ENCODE measurements at regions of chr16 and their contacts with region 1.

Region 1: GRCh38 chr16:66872943-66873684 is 7.2 kb upstream of the PDP2 start:
- DNase-seq: peak; percentile 96
- H3K4me3 Mint-ChIP-seq: peak overlapping the region; percentile 74
- H3K27ac Mint-ChIP-seq: peak overlapping the region; percentile 69
- H3K4me1 Mint-ChIP-seq: peaks cover 46% of the 10 kb centered on the region
- H3K27me3 Mint-ChIP-seq: no peaks in the 10 kb centered on the region

Region 2: GRCh38 chr16:66406534-66407221 is 466.4 kb before region 1 on chr16:
- CTCF ChIA-PET with region 1: interaction called, 18 read pairs
- POLR2A ChIA-PET with region 1: no interaction called
- intact Hi-C with region 1: loop called (anchors 5 kb)
- DNase-seq: peak; percentile 92
- H3K4me3 Mint-ChIP-seq: peak overlapping the region; percentile 80
- H3K27ac Mint-ChIP-seq: no peak overlapping the region
- H3K4me1 Mint-ChIP-seq: peaks cover 24% of the 10 kb centered on the region
- H3K27me3 Mint-ChIP-seq: peaks cover 2% of the 10 kb centered on the region

Region 3: DNA sequence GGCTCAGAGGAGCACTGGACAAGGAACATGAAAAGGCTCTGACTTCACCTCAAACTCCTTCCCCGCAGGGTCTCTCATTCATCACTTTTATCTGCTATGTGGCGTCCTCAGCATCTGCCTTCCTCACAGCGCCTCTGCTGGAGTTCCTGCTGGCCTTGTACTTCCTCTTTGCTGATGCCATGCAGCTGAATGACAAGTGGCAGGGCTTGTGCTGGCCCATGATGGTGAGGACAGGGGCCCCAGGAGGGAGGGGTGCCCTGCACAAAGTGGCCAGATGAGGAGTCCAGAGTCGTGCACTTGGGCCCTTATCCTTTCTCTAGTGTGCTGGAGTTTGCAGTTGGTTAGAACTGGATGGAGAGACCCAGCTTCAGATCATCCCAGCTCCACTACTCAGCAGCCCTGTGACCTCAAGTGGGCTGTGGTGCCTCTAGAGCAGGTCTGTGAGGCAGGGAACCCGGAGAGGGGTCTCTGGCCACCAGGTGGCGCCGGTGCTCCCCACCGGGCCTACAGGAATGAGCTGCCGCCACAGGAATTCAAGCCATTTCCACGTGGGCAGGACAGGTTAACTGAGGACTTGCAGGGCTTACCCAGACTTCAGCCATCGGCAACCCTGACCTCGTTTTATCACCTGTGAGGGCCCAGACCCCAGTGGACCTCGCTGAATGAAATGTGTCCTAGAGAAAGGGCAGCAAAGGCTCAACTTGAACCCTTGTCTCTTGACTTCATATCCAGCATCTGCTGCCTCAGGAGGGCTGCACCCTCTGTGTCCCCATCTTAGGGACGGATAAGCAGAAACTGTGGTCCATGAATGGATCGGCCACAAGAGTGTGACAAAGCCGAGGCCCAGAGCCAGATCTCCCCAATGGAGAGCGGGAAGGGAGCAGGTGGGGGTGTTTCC is 264.6 kb before region 1 on chr16:
- CTCF ChIA-PET with region 1: interaction called, 13 read pairs
- POLR2A ChIA-PET with region 1: no interaction called
- intact Hi-C with region 1: loop called (anchors 5 kb)
- DNase-seq: peak; percentile 89
- H3K4me3 Mint-ChIP-seq: no peak overlapping the region
- H3K27ac Mint-ChIP-seq: peak overlapping the region; percentile 62
- H3K4me1 Mint-ChIP-seq: peaks cover 34% of the 10 kb centered on the region
- H3K27me3 Mint-ChIP-seq: no peaks in the 10 kb centered on the region

Region 4: GRCh38 chr16:66705790-66706505 is 167.2 kb before region 1 on chr16:
- CTCF ChIA-PET with region 1: no interaction called
- POLR2A ChIA-PET with region 1: no interaction called
- intact Hi-C with region 1: no loop called
- DNase-seq: no peak
- H3K4me3 Mint-ChIP-seq: no peak overlapping the region
- H3K27ac Mint-ChIP-seq: no peak overlapping the region
- H3K4me1 Mint-ChIP-seq: no peaks in the 10 kb centered on the region
- H3K27me3 Mint-ChIP-seq: no peaks in the 10 kb centered on the region

Region 5: GRCh38 chr16:66728117-66728787 is 144.9 kb before region 1 on chr16:
- CTCF ChIA-PET with region 1: interaction called, 36 read pairs
- POLR2A ChIA-PET with region 1: no interaction called
- intact Hi-C with region 1: loop called (anchors 1 kb)
- DNase-seq: no peak
- H3K4me3 Mint-ChIP-seq: no peak overlapping the region
- H3K27ac Mint-ChIP-seq: no peak overlapping the region
- H3K4me1 Mint-ChIP-seq: peaks cover 2% of the 10 kb centered on the region
- H3K27me3 Mint-ChIP-seq: no peaks in the 10 kb centered on the region

Region 6: GRCh38 chr16:66830422-66831404 is 42.4 kb before region 1 on chr16 and contains the start of gene NAE1:
- CTCF ChIA-PET with region 1: interaction called, 355 read pairs
- POLR2A ChIA-PET with region 1: interaction called, 14 read pairs
- intact Hi-C with region 1: loop called (anchors 1 kb)
- DNase-seq: peak; percentile 92
- H3K4me3 Mint-ChIP-seq: peak within 1 kb of the TSS; percentile 75
- H3K27ac Mint-ChIP-seq: peak within 1 kb of the TSS; percentile 49
- H3K4me1 Mint-ChIP-seq: peaks cover 43% of the 10 kb centered on the region
- H3K27me3 Mint-ChIP-seq: no peaks in the 10 kb centered on the region
- total RNA-seq, gene NAE1: 121 to 126 TPM

Region 7: DNA sequence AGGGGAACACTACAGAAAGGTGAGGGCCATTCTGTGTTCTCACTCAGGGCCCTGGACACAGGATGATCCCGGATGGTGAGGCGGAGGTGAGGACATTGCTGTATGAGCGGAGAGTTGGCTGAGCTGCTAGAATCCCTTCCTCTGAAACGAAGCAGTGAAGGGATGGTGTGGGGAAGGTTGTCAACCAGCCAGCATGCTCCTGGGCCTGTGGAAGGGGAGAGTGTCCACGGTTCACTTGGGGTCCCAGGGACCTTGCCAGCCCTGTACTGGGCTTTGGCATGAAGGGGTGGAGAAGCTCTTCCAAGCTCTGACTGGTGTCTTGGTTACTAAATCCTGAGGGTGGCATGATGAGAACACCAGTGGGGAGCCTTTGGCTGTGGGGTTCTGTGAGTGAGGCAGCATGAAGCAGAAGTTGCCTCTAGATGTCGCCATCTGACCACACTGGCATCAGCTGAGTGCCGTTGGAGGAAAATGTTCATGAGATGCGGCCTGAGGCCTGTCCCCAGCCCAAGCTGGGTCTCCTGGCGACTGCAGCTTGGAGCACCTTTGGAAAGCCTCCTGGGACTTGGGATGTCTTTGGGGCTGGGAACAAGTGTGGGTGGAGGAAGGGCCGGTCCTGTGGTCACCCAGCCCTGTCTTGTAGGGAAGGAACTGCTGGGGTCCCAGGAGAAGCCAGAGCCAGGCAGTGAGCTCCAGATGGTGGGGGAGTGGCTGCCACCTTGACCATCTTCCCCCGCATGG is 22.0 kb after region 1 on chr16:
- CTCF ChIA-PET with region 1: interaction called, 15 read pairs
- POLR2A ChIA-PET with region 1: no interaction called
- intact Hi-C with region 1: no loop called
- DNase-seq: peak; percentile 75
- H3K4me3 Mint-ChIP-seq: no peak overlapping the region
- H3K27ac Mint-ChIP-seq: no peak overlapping the region
- H3K4me1 Mint-ChIP-seq: peaks cover 8% of the 10 kb centered on the region
- H3K27me3 Mint-ChIP-seq: no peaks in the 10 kb centered on the region

Region 8: DNA sequence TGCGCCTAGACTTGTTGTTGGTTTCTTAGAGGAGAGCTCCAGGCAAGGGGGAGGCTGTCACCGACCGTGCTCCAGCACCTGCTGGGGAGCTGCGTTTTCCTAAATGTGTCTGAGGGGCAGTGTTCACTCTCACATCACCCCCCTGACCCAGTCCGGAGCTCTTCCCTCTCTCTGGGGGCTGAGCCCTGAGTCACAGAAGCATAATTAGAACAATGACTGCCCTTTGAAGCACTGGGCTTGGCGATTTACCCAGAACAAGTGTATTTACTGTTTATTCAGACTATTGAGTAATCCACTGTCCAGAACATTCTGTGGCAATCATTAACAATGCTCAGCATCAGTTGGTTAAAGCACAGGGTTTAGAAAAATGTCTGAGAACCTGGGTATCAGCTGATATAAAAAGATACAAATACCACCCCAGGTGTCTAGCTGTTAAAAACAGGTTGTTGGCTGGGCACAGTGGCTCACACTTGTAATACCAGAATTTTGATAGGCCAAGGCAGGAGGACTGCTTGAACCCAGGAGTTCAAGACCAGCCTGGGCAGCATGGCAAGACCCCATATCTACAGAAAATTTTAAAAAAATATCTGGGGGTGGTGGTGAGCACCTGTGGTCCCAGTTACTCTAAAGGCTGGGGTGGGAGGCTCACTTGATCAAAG is 123.3 kb after region 1 on chr16:
- CTCF ChIA-PET with region 1: no interaction called
- POLR2A ChIA-PET with region 1: no interaction called
- intact Hi-C with region 1: no loop called
- DNase-seq: no peak
- H3K4me3 Mint-ChIP-seq: no peak overlapping the region
- H3K27ac Mint-ChIP-seq: no peak overlapping the region
- H3K4me1 Mint-ChIP-seq: peaks cover 14% of the 10 kb centered on the region
- H3K27me3 Mint-ChIP-seq: no peaks in the 10 kb centered on the region

Region 9: GRCh38 chr16:67017810-67018488 is 144.8 kb after region 1 on chr16:
- CTCF ChIA-PET with region 1: no interaction called
- POLR2A ChIA-PET with region 1: no interaction called
- intact Hi-C with region 1: no loop called
- DNase-seq: peak; percentile 95
- H3K4me3 Mint-ChIP-seq: no peak overlapping the region
- H3K27ac Mint-ChIP-seq: no peak overlapping the region
- H3K4me1 Mint-ChIP-seq: peaks cover 19% of the 10 kb centered on the region
- H3K27me3 Mint-ChIP-seq: no peaks in the 10 kb centered on the region